ENCODE measurements at regions of chr18 and their contacts with region 1.

Region 1: GRCh38 chr18:6521795-6522418 is 107.2 kb upstream of the L3MBTL4 start:
- DNase-seq: peak; percentile 39
- H3K4me3 Mint-ChIP-seq: no peak overlapping the region
- H3K27ac Mint-ChIP-seq: no peak overlapping the region
- H3K4me1 Mint-ChIP-seq: no peaks in the 10 kb centered on the region
- H3K27me3 Mint-ChIP-seq: peaks cover 23% of the 10 kb centered on the region
- CTCF ChIP-seq: peak; percentile 89

Region 2: GRCh38 chr18:5868218-5869115 is 653.4 kb before region 1 on chr18:
- CTCF ChIA-PET with region 1: interaction called, 16 read pairs
- POLR2A ChIA-PET with region 1: no interaction called
- intact Hi-C with region 1: no loop called
- DNase-seq: peak; percentile 42
- H3K4me3 Mint-ChIP-seq: no peak overlapping the region
- H3K27ac Mint-ChIP-seq: no peak overlapping the region
- H3K4me1 Mint-ChIP-seq: no peaks in the 10 kb centered on the region
- H3K27me3 Mint-ChIP-seq: peaks cover 20% of the 10 kb centered on the region
- CTCF ChIP-seq: peak; percentile 79

Region 3: DNA sequence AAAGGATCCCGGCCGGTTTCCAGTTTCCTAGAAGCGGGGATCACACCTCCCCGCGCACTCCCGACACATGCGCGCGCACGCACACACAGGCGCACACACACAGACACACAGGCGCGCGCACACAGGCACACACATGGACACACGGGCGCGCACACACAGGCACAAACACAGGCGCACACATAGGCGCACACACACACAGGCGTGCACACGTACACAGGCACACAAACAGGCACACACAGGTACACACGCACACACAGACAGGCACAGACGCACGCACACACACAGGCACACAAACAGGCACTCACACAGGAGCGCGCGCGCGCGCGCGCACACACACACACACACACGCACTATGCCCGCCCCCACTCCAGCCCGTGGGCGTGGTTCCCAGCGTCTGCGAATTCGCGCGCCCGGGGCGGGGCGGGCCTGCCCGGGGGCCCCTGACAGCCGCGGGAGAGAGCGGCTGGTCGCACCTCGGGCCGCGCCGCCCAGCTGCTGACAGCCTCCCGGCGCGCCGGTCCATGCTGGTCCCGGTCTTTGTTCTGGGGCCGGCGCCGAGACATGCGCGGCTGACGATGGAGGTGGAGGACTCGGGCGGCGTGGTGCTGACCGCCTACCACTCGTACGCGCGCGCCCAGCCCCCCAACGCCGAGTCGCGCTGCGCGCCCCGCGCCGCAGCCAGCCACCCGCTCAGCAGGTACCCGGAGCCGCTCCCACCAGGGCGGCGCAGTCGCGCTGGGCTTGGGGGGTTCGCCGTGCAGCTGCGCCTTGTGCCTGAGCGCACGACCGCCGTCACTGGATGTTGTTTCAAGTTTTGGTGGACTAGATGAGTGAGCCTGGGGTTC is 207.6 kb after region 1 on chr18 and contains the start of gene ARHGAP28:
- CTCF ChIA-PET with region 1: no interaction called
- POLR2A ChIA-PET with region 1: no interaction called
- intact Hi-C with region 1: no loop called
- DNase-seq: peak; percentile 80
- H3K4me3 Mint-ChIP-seq: peak within 1 kb of the TSS; percentile 93
- H3K27ac Mint-ChIP-seq: peak within 1 kb of the TSS; percentile 80
- H3K4me1 Mint-ChIP-seq: peaks cover 19% of the 10 kb centered on the region
- H3K27me3 Mint-ChIP-seq: no peaks in the 10 kb centered on the region
- CTCF ChIP-seq: no peak
- total RNA-seq, gene ARHGAP28: 1.9 and 3.0 TPM in 2 replicates

Measured in MCF 10A (cell line).